Right ventricle myocardium superior (tissue), 1 donor: ENCODE measurements at regions of chr10 and their contacts with region 1.

Region 1: DNA sequence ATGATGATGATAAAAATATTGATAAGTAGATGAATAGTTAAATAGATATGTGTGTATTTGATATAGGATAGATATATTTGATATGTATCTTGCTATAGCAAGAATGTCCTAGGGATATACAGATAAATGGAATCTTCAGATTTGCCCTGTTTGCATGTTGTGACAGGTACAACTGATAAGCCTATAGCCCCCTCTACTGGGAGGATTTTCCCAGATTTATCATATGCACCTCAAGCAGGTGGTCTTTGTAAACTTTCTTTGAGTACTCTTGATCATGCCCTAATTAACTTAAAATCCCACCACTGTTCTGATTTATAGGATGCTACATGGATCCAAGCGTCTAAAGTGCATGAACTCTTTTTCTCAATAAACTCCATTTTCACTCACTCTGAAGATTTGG is 1050.7 kb downstream of the SORCS3 start:
- DNase-seq: no peak
- ATAC-seq: no peak

Region 2: GRCh38 chr10:105070952-105071351 is 620.9 kb before region 1 on chr10:
- intact Hi-C with region 1: loop called (anchors 5 kb)
- DNase-seq: no peak
- ATAC-seq: no peak

Region 3: DNA sequence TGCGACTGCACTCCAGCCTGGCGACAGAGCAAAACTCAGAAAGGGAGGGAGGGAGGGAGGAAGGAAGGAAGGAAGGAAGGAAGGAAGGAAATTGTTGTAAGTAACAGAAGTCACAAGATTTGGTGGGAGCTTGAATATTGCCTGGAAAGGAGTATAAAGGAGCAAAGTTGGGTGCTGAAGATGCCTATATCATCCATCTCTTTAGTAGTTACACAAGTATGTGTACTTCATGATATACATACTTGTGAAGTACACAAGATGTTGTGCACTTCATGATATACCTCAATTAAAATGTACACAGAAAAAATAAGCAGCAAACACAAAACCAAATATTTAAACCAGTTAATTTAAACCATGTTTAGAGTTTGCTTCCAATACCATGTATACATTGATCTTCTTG is 173.0 kb after region 1 on chr10:
- intact Hi-C with region 1: no loop called
- DNase-seq: no peak
- ATAC-seq: no peak